Activated CD4-positive, alpha-beta memory T cell treated with anti-CD3 and anti-CD28 coated beads for 36 hours (primary cell): ENCODE measurements at regions of chr4 and their contacts with region 1.

Region 1: GRCh38 chr4:123785538-123785937 is 388.9 kb downstream of the SPRY1 start:
- DNase-seq: no peak
- H3K4me3 Mint-ChIP-seq: no peak overlapping the region
- H3K27ac Mint-ChIP-seq: no peak overlapping the region
- H3K4me1 Mint-ChIP-seq: no peaks in the 10 kb centered on the region
- H3K27me3 Mint-ChIP-seq: no peaks in the 10 kb centered on the region

Region 2: GRCh38 chr4:123812066-123812390 is 26.5 kb after region 1 on chr4:
- CTCF ChIA-PET with region 1: no interaction called
- POLR2A ChIA-PET with region 1: no interaction called
- intact Hi-C with region 1: loop called (anchors 1 kb)
- DNase-seq: no peak
- H3K4me3 Mint-ChIP-seq: no peak overlapping the region
- H3K27ac Mint-ChIP-seq: no peak overlapping the region
- H3K4me1 Mint-ChIP-seq: no peaks in the 10 kb centered on the region
- H3K27me3 Mint-ChIP-seq: no peaks in the 10 kb centered on the region